ENCODE measurements at regions of chr1 and their contacts with region 1.

Region 1: DNA sequence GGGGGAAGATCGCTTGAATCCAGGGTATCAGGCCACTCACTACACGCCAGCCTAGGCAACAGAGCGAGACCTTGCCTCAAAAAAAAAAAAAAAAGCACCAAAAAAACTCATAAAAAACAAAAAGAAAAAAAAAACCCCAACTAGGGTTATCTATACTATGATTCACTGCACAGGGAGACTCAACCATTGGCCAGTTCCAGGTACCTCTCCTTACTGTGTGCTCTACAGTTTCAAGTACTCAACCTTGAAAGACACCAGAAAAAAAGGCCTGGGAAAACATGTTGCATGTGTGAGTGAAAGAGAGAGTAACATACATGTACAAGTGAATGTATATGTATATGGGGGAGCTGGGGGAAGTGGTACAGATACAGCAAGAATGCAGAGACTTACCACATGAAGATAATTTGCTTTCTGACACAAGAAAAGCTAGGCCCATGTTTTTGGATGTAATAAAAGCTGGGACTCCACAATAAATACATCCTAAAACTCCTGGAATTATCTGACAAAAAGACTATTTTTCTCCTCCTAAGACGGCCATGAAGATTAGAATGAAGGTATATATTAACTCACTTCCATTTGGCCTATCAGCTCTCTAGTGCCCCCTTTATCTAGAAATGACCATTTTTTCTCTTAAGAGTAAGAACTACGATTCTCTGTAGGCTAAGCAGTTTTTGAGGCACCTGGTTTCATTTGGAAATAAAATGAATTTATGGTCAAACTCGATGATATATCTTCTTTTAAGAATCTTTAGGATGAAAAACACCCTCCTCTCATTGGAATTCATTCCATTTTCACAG is 52.2 kb downstream of the SLC27A3 start:
- DNase-seq: no peak
- H3K4me3 ChIP-seq: no peak overlapping the region
- H3K27ac ChIP-seq: no peak overlapping the region
- H3K4me1 ChIP-seq: no peaks in the 10 kb centered on the region
- H3K27me3 ChIP-seq: no peaks in the 10 kb centered on the region
- CTCF ChIP-seq: no peak

Region 2: DNA sequence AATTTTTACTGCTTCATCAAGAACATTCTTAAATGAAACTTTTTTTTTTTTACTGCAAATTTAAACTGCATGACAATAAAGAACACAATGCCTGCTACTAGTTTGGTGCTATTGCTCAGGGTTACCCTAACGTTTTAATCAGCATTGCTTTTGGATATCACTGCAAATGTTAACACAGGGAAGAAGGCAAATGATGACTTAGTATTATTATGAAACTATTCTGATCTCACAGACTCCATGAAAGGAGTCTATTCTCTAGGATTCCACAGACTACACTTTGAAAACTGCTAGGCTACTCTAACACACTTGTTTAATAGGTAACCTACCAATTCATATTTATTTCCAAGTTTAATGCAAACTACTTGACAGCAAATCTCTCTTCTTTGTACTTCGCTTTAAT is 45.6 kb after region 1 on chr1:
- intact Hi-C with region 1: loop called (anchors 10 kb)
- DNase-seq: no peak
- H3K4me3 ChIP-seq: no peak overlapping the region
- H3K27ac ChIP-seq: no peak overlapping the region
- H3K4me1 ChIP-seq: no peaks in the 10 kb centered on the region
- H3K27me3 ChIP-seq: no peaks in the 10 kb centered on the region
- CTCF ChIP-seq: no peak